ENCODE measurements at regions of chr13 and their contacts with region 1.

Region 1: GRCh38 chr13:33723772-33724435 is 94.0 kb upstream of the RFC3 start:
- DNase-seq: peak; percentile 73
- ATAC-seq: peak; percentile 86
- H3K4me3 Mint-ChIP-seq: no peak overlapping the region
- H3K27ac Mint-ChIP-seq: no peak overlapping the region
- H3K4me1 Mint-ChIP-seq: peaks cover 12% of the 10 kb centered on the region
- H3K27me3 Mint-ChIP-seq: no peaks in the 10 kb centered on the region

Region 2: GRCh38 chr13:33542283-33543088 is 181.4 kb before region 1 on chr13:
- CTCF ChIA-PET with region 1: interaction called, 45 read pairs
- POLR2A ChIA-PET with region 1: interaction called, 11 read pairs
- DNase-seq: peak; percentile 97
- ATAC-seq: peak; percentile 91
- H3K4me3 Mint-ChIP-seq: peak overlapping the region; percentile 88
- H3K27ac Mint-ChIP-seq: peak overlapping the region; percentile 100
- H3K4me1 Mint-ChIP-seq: peaks cover 30% of the 10 kb centered on the region
- H3K27me3 Mint-ChIP-seq: no peaks in the 10 kb centered on the region

Region 3: GRCh38 chr13:33612641-33613638 is 111.0 kb before region 1 on chr13:
- CTCF ChIA-PET with region 1: no interaction called
- POLR2A ChIA-PET with region 1: no interaction called
- DNase-seq: no peak
- ATAC-seq: peak; percentile 50
- H3K4me3 Mint-ChIP-seq: no peak overlapping the region
- H3K27ac Mint-ChIP-seq: peak overlapping the region; percentile 7
- H3K4me1 Mint-ChIP-seq: peaks cover 38% of the 10 kb centered on the region
- H3K27me3 Mint-ChIP-seq: peaks cover 2% of the 10 kb centered on the region

Region 4: GRCh38 chr13:34139660-34140227 is 415.8 kb after region 1 on chr13:
- CTCF ChIA-PET with region 1: no interaction called
- POLR2A ChIA-PET with region 1: no interaction called
- DNase-seq: no peak
- ATAC-seq: no peak
- H3K4me3 Mint-ChIP-seq: no peak overlapping the region
- H3K27ac Mint-ChIP-seq: no peak overlapping the region
- H3K4me1 Mint-ChIP-seq: no peaks in the 10 kb centered on the region
- H3K27me3 Mint-ChIP-seq: no peaks in the 10 kb centered on the region

Measured in activated CD8-positive, alpha-beta T cell treated with anti-CD3 and anti-CD28 coated beads, Interleukin-2, amount 10 ng/mL, durations not matched to agents 7 days and 5 days (primary cell).